ENCODE measurements at regions of chr20 and their contacts with region 1.

Region 1: GRCh38 chr20:62937366-62938104 is 412 bp upstream of the GID8 start:
- DNase-seq: peak; percentile 82
- ATAC-seq: peak; percentile 91
- H3K4me3 ChIP-seq: peak overlapping the region; percentile 71
- H3K27ac ChIP-seq: peak overlapping the region; percentile 90
- H3K4me1 ChIP-seq: 0 out of 2 replicates have a peak, but pooled peaks cover 5% of the 10 kb centered on the region
- H3K27me3 ChIP-seq: no peaks in the 10 kb centered on the region
- CTCF ChIP-seq: no peak
- EP300 ChIP-seq: 0 out of 4 replicates have a peak, but pooled peaks of 1 of the 2 experiments have one; percentile 13
- POLR2A ChIP-seq: peak; percentile 90
- RAD21 ChIP-seq: no peak

Region 2: DNA sequence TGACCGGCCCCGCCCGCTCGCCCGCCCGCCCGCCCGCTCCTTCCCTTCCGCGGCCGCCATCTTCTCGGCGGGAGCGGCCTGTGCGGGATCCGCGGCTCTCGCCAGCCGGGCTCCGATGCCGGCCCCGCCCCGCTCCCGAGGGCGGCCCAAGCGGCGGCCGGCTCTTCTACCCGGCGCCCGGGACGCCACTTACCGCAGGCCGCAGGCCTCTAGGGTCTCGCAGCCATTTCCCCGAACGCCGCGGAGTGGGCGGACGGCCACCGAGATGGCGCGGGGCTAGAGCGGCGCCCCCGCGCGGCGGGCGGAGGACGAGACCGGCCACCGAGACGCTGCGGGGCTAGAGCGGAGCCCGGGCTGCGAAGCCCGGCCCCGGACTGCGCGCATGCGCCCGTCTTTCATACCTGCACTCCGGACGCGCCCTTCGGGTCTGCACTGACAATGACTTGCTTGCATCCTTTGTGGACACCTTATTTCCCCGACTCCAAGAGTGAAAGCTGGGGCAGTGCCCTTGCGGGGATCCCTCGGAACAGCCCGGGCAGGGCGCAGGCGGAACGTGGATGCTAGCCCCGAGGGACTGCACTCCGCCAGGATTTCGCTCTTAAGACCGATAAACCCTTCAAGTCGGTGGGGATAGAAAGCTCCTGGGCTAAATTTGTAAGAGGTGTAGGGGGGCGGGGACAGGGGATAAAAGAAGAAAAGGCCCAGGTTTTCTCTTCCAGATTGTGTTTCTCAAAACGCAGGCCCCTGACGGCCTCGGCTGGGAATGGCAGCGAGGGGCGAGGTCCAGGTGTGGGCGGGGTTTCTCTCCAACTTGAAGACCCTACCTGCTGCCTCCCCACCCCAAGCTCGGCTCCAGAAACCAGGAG is 11.1 kb before region 1 on chr20 and contains the start of gene DIDO1:
- CTCF ChIA-PET with region 1: interaction called, 14 read pairs
- POLR2A ChIA-PET with region 1: interaction called, 59 read pairs
- RAD21 ChIA-PET with region 1: interaction called, 3 read pairs
- SMC1A ChIA-PET with region 1: interaction called, 10 read pairs
- in situ Hi-C with region 1: no loop called
- intact Hi-C with region 1: no loop called
- DNase-seq: peak; percentile 56
- ATAC-seq: peak; percentile 82
- H3K4me3 ChIP-seq: peak within 1 kb of the TSS; percentile 64
- H3K27ac ChIP-seq: peak within 1 kb of the TSS; percentile 96
- H3K4me1 ChIP-seq: peaks cover 19% of the 10 kb centered on the region
- H3K27me3 ChIP-seq: no peaks in the 10 kb centered on the region
- CTCF ChIP-seq: peak; percentile 34 to 59 (median 47); a peak in 5 of 6 replicates
- EP300 ChIP-seq: no peak
- POLR2A ChIP-seq: peak; percentile 80
- RAD21 ChIP-seq: no peak
- polyA plus RNA-seq, gene DIDO1: 5.5 to 7.8 TPM

Region 3: GRCh38 chr20:62961310-62961783 is 23.8 kb after region 1 on chr20:
- CTCF ChIA-PET with region 1: no interaction called
- POLR2A ChIA-PET with region 1: no interaction called
- RAD21 ChIA-PET with region 1: no interaction called
- SMC1A ChIA-PET with region 1: no interaction called
- in situ Hi-C with region 1: no loop called
- intact Hi-C with region 1: no loop called
- DNase-seq: no peak
- ATAC-seq: no peak
- H3K4me3 ChIP-seq: no peak overlapping the region
- H3K27ac ChIP-seq: no peak overlapping the region
- H3K4me1 ChIP-seq: no peaks in the 10 kb centered on the region
- H3K27me3 ChIP-seq: no peaks in the 10 kb centered on the region
- CTCF ChIP-seq: no peak
- EP300 ChIP-seq: no peak
- POLR2A ChIP-seq: no peak
- RAD21 ChIP-seq: no peak

Region 4: GRCh38 chr20:62999580-62999979 is 62.0 kb after region 1 on chr20:
- CTCF ChIA-PET with region 1: no interaction called
- POLR2A ChIA-PET with region 1: no interaction called
- RAD21 ChIA-PET with region 1: no interaction called
- SMC1A ChIA-PET with region 1: no interaction called
- in situ Hi-C with region 1: no loop called
- intact Hi-C with region 1: no loop called
- DNase-seq: no peak
- ATAC-seq: no peak; the same call in 2 of the 3 replicates
- H3K4me3 ChIP-seq: no peak overlapping the region
- H3K27ac ChIP-seq: no peak overlapping the region
- H3K4me1 ChIP-seq: no peaks in the 10 kb centered on the region
- H3K27me3 ChIP-seq: peaks cover 4 to 10% of the 10 kb centered on the region in 2 experiments
- CTCF ChIP-seq: no peak
- EP300 ChIP-seq: no peak
- POLR2A ChIP-seq: no peak
- RAD21 ChIP-seq: no peak

Region 5: DNA sequence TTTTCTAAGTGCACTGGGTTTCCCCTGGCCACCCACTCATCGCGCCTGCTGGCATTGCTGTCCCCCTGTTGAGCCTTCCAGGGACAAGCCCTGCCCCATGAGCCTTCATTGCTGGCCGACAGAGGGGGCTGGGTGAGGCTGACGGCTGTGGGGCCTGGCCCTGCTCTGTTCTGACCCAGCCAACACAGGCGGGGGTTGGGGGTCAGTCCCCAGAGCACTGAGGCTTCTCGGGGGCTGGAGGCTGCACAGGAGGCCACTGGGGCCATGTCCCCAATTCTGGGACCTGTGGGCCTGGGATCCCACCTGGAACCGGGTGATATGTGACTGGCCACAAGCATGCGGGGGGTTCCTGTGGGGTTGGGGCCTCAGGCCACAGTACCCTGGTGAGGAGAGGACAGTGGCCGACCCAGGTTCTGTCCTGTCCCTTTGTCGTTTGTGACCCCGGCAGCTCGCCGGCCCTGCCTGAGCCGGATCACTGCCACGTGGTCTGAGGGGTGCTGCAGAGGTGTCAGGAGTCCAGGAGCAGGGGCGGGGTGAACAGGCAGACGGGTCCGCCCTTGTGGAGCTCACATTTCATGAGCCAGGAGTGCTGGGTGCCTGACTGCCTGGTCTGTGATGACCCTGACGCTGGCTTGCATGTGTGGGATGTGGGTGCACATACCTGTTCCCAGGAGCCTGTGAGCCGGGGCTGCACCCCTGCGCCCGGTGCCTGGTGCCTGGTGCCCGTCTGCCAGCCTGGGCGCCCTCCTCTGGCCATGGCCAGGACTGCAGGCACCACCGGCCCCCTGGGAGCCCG is 353.3 kb after region 1 on chr20:
- CTCF ChIA-PET with region 1: no interaction called
- POLR2A ChIA-PET with region 1: no interaction called
- RAD21 ChIA-PET with region 1: no interaction called
- SMC1A ChIA-PET with region 1: no interaction called
- in situ Hi-C with region 1: no loop called
- intact Hi-C with region 1: no loop called
- DNase-seq: no peak
- ATAC-seq: peak; percentile 87
- H3K4me3 ChIP-seq: no peak overlapping the region
- H3K27ac ChIP-seq: no peak overlapping the region
- H3K4me1 ChIP-seq: no peaks in the 10 kb centered on the region
- H3K27me3 ChIP-seq: no peaks in the 10 kb centered on the region; a peak in 1 of 4 replicates
- CTCF ChIP-seq: peak; percentile 58 to 91 (median 61)
- EP300 ChIP-seq: no peak
- POLR2A ChIP-seq: peak; percentile 48
- RAD21 ChIP-seq: peak; percentile 22; the same call in 1 of the 2 replicates

Measured in GM12878 (cell line).